Mammary epithelial cell (primary cell): ENCODE measurements at regions of chr10 and their contacts with region 1.

Region 1: DNA sequence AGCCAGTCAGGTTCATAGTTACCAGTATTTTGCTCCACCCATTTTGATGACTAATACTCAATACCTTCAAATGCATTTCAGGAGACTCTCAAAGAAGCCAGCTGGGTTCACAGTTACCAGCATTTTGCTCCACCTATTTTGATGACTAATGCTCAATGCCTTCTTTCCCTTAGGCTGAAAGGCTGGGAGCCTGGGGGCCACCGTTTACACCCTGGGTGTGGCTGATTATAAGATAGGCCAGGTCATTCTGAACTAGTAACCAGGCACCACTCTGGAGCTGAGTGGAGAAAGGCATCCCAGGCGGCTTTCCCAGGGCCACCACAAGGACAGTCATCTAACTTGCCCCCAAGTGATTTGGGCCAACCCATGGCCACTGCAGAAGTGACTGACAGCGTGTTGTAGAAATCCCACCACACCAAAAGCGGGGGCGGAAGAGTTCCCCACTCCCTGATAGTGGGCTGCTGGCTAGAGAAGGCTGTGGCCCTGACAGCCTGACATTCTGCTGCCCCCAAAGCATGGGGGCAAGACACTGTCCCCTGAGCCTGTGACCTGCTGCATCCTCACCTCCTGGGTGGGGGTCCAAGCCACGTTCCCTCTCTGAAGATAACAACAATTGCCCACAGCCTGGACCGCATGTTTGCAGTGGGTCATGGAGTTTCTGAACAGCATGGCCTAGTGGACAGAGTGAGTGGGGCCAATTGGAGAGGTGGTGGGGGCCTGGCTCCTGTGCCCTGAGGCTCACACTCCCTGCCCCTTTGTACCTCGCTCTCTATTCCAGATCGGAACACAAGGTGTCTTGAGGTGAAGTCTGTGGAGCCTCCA is 23.0 kb upstream of the ZNF488 start:
- DNase-seq: peak; percentile 97
- H3K4me3 ChIP-seq: no peak overlapping the region
- H3K27ac ChIP-seq: peak overlapping the region; percentile 50
- H3K4me1 ChIP-seq: peaks cover 41% of the 10 kb centered on the region
- H3K27me3 ChIP-seq: no peaks in the 10 kb centered on the region
- CTCF ChIP-seq: no peak

Region 2: DNA sequence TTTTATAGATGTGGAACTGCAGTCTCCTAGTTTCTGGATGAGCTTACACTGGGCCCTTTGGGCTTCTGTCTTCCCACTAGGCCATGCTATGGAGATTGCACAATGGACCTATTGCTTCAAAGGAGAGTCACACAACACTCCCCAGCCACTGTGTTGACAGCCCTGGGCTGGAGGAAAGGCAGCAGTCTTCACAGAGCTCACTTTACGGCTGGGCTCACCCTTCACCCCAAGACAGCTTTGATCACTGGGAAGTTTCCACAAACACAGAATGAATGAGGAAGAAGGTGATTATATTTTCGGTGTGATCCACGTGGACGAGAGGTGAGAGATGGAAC is 199.8 kb before region 1 on chr10:
- CTCF ChIA-PET with region 1: no interaction called
- dilution Hi-C with region 1: no loop called
- in situ Hi-C with region 1: no loop called
- intact Hi-C with region 1: no loop called
- DNase-seq: no peak
- H3K4me3 ChIP-seq: no peak overlapping the region
- H3K27ac ChIP-seq: no peak overlapping the region
- H3K4me1 ChIP-seq: no peaks in the 10 kb centered on the region
- H3K27me3 ChIP-seq: no peaks in the 10 kb centered on the region
- CTCF ChIP-seq: no peak

Region 3: GRCh38 chr10:47361293-47361692 is 45.8 kb before region 1 on chr10:
- CTCF ChIA-PET with region 1: no interaction called
- dilution Hi-C with region 1: no loop called
- in situ Hi-C with region 1: no loop called
- intact Hi-C with region 1: no loop called
- DNase-seq: no peak
- H3K4me3 ChIP-seq: no peak overlapping the region
- H3K27ac ChIP-seq: no peak overlapping the region
- H3K4me1 ChIP-seq: peaks cover 4% of the 10 kb centered on the region
- H3K27me3 ChIP-seq: no peaks in the 10 kb centered on the region
- CTCF ChIP-seq: peak; percentile 94

Region 4: DNA sequence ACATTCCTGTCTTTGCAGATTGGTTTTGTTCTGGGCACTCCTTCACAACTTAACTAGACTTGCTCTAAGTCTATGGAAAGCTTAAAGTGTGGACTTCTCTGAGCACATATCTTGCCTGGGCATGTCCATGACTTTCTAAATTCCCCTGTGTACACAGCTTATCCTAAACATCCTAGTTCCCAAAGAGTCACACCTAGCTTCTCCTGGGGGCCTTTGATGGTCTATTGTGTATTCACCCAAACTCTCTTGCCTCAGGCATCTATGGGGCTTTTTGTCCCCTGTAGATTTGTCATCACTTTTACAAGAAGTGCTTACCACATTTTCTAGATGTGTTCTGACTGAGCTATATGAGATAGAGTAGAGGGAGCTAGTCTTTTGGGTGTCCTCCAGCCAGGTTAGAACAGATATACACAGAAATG is 10.8 kb before region 1 on chr10:
- CTCF ChIA-PET with region 1: no interaction called
- dilution Hi-C with region 1: no loop called
- in situ Hi-C with region 1: no loop called
- intact Hi-C with region 1: loop called (anchors 1 kb)
- DNase-seq: peak; percentile 97
- H3K4me3 ChIP-seq: no peak overlapping the region
- H3K27ac ChIP-seq: peak overlapping the region; percentile 90
- H3K4me1 ChIP-seq: peaks cover 24% of the 10 kb centered on the region
- H3K27me3 ChIP-seq: no peaks in the 10 kb centered on the region
- CTCF ChIP-seq: no peak